ENCODE measurements at regions of chr9 and their contacts with region 1.

Region 1: DNA sequence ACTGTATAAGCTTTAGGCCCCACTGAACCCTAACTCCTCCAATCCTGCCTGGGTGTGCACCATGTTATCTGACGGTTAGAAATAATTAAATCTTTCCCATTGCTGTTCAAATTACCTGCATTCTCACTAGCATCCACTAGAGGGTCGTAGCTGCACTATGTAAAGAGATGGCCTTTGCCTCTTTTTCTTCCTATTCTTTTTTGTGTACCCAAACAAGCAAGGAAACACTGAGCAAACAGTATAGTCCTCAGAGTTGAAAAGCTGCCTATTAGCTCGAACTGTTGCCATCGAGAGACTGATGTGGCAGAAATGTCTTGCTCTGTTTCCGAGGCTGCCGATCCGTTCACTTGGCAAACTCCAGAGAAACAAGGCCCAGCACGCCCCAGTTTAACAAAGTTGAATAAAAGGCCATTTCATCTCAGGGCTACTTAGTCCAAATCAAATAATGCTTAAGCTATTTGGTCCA is 163.8 kb upstream of the TRPM3 start:
- DNase-seq: peak; percentile 24
- ATAC-seq: peak; percentile 95
- H3K4me3 Mint-ChIP-seq: no peak overlapping the region
- H3K27ac Mint-ChIP-seq: no peak overlapping the region
- H3K4me1 Mint-ChIP-seq: peaks cover 15% of the 10 kb centered on the region
- H3K27me3 Mint-ChIP-seq: no peaks in the 10 kb centered on the region
- CTCF ChIP-seq: peak; percentile 77

Region 2: GRCh38 chr9:71072587-71072986 is 212.6 kb before region 1 on chr9:
- CTCF ChIA-PET with region 1: no interaction called
- POLR2A ChIA-PET with region 1: no interaction called
- DNase-seq: no peak
- ATAC-seq: no peak
- H3K4me3 Mint-ChIP-seq: no peak overlapping the region
- H3K27ac Mint-ChIP-seq: no peak overlapping the region
- H3K4me1 Mint-ChIP-seq: peaks cover 25% of the 10 kb centered on the region
- H3K27me3 Mint-ChIP-seq: no peaks in the 10 kb centered on the region
- CTCF ChIP-seq: no peak

Region 3: DNA sequence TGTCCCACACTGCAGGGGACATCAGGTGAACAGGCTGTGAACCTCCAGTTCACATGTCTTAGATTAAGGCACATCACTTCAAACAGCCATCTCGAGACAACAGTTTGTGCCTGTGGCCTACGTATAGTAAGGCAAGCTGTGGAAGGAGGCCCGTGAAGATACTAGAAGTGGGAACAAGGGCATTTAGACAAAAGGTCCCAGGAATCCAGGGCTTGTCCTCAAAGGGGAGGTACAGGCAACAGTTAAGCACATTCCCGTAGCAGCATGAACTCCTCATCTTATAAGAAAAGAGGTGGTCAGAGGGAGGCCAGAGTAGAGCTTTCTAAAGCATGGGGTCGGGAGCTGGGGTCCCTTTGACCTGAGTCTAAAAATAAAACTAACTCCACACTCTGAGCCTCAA is 41.3 kb before region 1 on chr9:
- CTCF ChIA-PET with region 1: no interaction called
- POLR2A ChIA-PET with region 1: no interaction called
- DNase-seq: no peak
- ATAC-seq: peak; percentile 75
- H3K4me3 Mint-ChIP-seq: no peak overlapping the region
- H3K27ac Mint-ChIP-seq: peak overlapping the region; percentile 75
- H3K4me1 Mint-ChIP-seq: peaks cover 70% of the 10 kb centered on the region
- H3K27me3 Mint-ChIP-seq: no peaks in the 10 kb centered on the region
- CTCF ChIP-seq: no peak

Region 4: GRCh38 chr9:71446473-71447411 is 161.5 kb after region 1 on chr9:
- CTCF ChIA-PET with region 1: interaction called, 15 read pairs
- POLR2A ChIA-PET with region 1: no interaction called
- DNase-seq: peak; percentile 88
- ATAC-seq: peak; percentile 88
- H3K4me3 Mint-ChIP-seq: peak overlapping the region; percentile 92
- H3K27ac Mint-ChIP-seq: peak overlapping the region; percentile 66; the same call in 1 of the 2 replicates
- H3K4me1 Mint-ChIP-seq: peaks cover 31% of the 10 kb centered on the region
- H3K27me3 Mint-ChIP-seq: peaks cover 7% of the 10 kb centered on the region; the same call in 1 of the 2 replicates
- CTCF ChIP-seq: no peak